Mammary epithelial cell (primary cell): ENCODE measurements at regions of chr4 and their contacts with region 1.

Region 1: GRCh38 chr4:145234091-145234706 is 53.8 kb upstream of the OTUD4 start:
- DNase-seq: peak; percentile 43
- H3K4me3 ChIP-seq: no peak overlapping the region
- H3K27ac ChIP-seq: no peak overlapping the region
- H3K4me1 ChIP-seq: no peaks in the 10 kb centered on the region
- H3K27me3 ChIP-seq: no peaks in the 10 kb centered on the region
- CTCF ChIP-seq: peak; percentile 94 to 95

Region 2: DNA sequence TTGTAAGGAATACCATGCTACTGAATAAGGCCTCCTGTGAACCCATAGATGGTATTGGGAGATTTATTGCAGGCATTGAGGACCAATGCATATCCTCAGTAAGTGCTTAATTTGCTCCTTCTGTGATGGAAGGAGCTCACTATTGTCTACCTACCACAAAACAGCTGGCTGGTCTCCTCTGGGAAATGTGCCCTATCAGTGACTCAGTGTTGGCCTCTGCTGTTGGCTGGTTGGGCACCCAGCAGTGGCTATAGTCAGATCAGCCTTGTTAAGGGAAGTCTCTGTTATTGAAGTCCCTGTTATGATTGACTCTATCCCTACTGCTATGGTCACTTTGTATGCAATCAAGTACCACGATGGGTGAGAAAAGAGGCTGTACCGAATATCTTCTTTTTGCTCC is 26.3 kb before region 1 on chr4:
- CTCF ChIA-PET with region 1: no interaction called
- dilution Hi-C with region 1: no loop called
- in situ Hi-C with region 1: no loop called
- intact Hi-C with region 1: no loop called
- DNase-seq: peak; percentile 9
- H3K4me3 ChIP-seq: no peak overlapping the region
- H3K27ac ChIP-seq: no peak overlapping the region
- H3K4me1 ChIP-seq: no peaks in the 10 kb centered on the region
- H3K27me3 ChIP-seq: no peaks in the 10 kb centered on the region
- CTCF ChIP-seq: no peak

Region 3: DNA sequence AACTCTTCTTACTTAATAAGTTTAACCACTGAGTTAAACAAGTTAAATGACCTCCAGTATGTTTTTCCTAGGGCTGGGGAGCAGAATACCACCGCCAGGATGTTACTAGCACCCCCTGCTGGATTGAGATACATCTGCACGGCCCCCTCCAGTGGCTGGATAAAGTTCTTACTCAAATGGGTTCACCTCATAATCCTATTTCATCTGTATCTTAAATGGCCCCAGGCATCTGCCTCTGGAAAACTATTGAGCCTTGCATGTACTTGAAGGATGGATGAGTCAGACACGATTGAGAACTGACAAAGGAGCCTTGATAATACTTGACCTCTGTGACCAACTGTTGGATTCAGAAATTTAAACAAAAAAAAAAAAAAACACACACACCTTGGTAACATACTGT is 323.5 kb after region 1 on chr4:
- CTCF ChIA-PET with region 1: interaction called, 6 read pairs
- dilution Hi-C with region 1: no loop called
- in situ Hi-C with region 1: no loop called
- intact Hi-C with region 1: loop called (anchors 1 kb)
- DNase-seq: peak; percentile 75
- H3K4me3 ChIP-seq: no peak overlapping the region
- H3K27ac ChIP-seq: peak overlapping the region; percentile 42
- H3K4me1 ChIP-seq: peaks cover 5% of the 10 kb centered on the region
- H3K27me3 ChIP-seq: no peaks in the 10 kb centered on the region
- CTCF ChIP-seq: peak; percentile 97 to 99